GM10248 (cell line): ENCODE measurements at regions of chr22 and their contacts with region 1.

Region 1: DNA sequence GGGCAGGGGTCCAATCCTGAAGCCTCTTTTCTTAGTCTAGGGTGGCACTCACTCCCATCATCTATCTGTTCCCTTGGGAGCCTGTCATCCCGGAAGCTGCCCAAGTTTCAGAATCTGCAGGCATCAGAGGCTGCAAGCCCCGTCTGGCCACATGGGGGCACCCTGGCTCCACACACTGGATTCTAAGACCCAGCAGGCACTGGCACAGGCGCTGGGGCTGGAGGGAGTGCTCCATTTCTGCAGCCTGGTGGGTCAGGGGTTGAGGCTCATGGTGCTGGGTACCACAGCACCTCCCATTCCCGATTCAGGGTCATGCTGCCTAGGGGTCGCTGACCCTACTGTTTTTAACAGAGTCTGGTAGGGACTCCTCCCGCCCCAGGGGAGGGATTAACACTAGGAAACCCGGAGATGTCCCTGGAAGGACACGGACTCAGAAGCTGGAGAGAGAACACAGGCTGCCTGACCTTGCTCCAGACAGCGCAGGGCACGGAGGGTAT is 243.9 kb upstream of the SYN3 start:
- DNase-seq: peak; percentile 78
- CTCF ChIP-seq: peak; percentile 98

Region 2: DNA sequence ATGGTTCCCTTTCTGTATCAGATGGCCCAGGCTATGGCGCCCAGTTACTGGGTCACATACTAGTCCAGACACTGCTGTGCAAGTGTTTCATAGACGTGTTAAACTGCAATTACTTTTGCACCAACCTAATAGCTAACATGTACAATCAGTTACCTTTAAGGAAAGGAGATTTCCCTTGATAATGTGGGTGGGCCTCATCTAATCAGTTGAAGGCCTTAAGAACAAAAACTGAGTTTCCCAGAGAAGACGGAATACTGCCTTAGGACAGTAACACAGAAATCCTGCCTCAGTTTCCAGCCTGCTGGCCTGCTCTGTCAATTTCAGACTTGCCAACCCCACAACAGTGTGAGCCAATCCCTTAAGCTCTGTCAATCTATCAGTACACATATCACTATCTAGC is 14.0 kb before region 1 on chr22:
- CTCF ChIA-PET with region 1: interaction called, 11 read pairs
- POLR2A ChIA-PET with region 1: no interaction called
- DNase-seq: no peak
- CTCF ChIP-seq: no peak

Region 3: GRCh38 chr22:33325235-33326004 is 23.3 kb after region 1 on chr22:
- CTCF ChIA-PET with region 1: interaction called, 20 read pairs
- POLR2A ChIA-PET with region 1: interaction called, 3 read pairs
- DNase-seq: peak; percentile 70
- CTCF ChIP-seq: no peak

Region 4: GRCh38 chr22:33519071-33519973 is 217.2 kb after region 1 on chr22:
- CTCF ChIA-PET with region 1: interaction called, 10 read pairs
- POLR2A ChIA-PET with region 1: no interaction called
- DNase-seq: peak; percentile 74
- CTCF ChIP-seq: peak; percentile 53

Region 5: DNA sequence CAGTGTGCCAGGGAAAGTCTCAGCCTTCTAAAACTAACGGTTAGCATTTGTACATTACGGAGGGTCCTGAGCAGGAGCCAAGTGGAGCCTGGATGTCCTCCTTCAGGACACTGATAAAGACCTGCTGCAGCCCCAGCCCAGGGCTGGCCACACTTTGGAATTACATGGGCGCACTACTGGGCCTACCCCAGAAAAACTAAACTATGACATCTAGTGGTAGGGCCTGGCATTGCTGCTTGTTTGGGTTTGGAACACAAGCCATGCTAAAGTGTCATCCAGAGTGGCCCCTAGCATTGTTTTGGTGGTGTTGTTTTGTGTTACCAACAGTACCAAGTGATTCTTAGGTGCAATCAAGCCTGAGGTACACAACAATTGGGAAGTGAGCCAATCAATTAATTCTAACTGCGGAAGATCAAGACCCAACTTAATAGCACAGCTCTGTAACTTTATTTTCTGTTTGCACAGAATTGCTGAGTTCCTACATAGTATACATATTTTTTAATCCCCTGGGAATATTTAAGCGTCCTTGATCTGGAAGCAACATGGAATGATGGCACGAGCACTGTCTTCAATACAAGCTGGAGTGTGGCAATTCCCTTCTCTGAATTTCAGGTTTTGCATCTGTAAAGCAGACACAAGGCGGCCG is 277.5 kb after region 1 on chr22:
- CTCF ChIA-PET with region 1: interaction called, 28 read pairs
- POLR2A ChIA-PET with region 1: no interaction called
- DNase-seq: peak; percentile 65
- CTCF ChIP-seq: peak; percentile 86

Region 6: GRCh38 chr22:34111210-34111824 is 809.2 kb after region 1 on chr22:
- CTCF ChIA-PET with region 1: interaction called, 11 read pairs
- POLR2A ChIA-PET with region 1: no interaction called
- DNase-seq: peak; percentile 36
- CTCF ChIP-seq: peak; percentile 86